ENCODE measurements at regions of chr21 and their contacts with region 1.

Region 1: DNA sequence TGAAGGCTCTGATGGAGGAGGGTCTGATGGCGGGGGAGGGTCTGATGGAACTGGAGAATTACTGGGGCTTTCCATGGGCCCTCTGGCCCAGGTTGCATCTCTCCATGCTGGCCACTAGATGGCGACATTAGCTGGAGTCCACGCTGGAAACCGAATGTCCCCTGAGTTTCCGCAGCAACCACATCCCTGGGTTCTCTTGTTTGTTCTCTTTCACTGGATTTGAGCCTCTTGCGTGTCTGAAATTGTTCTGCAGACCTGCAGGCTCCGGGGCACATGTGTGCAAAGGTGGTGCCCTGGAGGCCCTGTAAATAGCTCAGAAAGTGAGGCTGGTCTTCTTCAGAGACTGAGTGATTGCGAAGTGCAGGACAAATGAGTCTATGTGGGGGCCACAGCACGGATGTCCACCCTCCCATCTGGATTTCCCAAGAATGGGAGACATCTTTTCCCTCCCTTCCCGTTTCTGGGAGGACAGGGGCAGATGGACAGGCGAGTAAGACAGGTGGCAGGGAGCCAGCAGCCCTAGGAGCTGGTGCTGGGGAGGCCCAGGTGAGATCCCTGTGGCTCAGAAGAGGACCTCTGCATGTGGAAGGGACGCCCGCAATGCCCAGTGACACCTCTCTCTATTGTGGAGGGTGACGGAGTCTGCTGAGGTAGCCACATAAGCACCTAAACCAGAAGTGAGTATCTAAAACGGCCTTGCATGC is 73.2 kb upstream of the ABCG1 start:
- DNase-seq: peak; percentile 75
- ATAC-seq: peak; percentile 89
- H3K4me3 Mint-ChIP-seq: no peak overlapping the region
- H3K27ac Mint-ChIP-seq: no peak overlapping the region
- H3K4me1 Mint-ChIP-seq: peaks cover 8% of the 10 kb centered on the region
- H3K27me3 Mint-ChIP-seq: no peaks in the 10 kb centered on the region
- CTCF ChIP-seq: peak; percentile 91

Region 2: GRCh38 chr21:42182713-42183371 is 37.1 kb after region 1 on chr21:
- CTCF ChIA-PET with region 1: interaction called, 10 read pairs
- POLR2A ChIA-PET with region 1: no interaction called
- intact Hi-C with region 1: no loop called
- DNase-seq: no peak
- ATAC-seq: no peak
- H3K4me3 Mint-ChIP-seq: no peak overlapping the region
- H3K27ac Mint-ChIP-seq: no peak overlapping the region
- H3K4me1 Mint-ChIP-seq: peaks cover 26% of the 10 kb centered on the region
- H3K27me3 Mint-ChIP-seq: no peaks in the 10 kb centered on the region
- CTCF ChIP-seq: no peak

Region 3: DNA sequence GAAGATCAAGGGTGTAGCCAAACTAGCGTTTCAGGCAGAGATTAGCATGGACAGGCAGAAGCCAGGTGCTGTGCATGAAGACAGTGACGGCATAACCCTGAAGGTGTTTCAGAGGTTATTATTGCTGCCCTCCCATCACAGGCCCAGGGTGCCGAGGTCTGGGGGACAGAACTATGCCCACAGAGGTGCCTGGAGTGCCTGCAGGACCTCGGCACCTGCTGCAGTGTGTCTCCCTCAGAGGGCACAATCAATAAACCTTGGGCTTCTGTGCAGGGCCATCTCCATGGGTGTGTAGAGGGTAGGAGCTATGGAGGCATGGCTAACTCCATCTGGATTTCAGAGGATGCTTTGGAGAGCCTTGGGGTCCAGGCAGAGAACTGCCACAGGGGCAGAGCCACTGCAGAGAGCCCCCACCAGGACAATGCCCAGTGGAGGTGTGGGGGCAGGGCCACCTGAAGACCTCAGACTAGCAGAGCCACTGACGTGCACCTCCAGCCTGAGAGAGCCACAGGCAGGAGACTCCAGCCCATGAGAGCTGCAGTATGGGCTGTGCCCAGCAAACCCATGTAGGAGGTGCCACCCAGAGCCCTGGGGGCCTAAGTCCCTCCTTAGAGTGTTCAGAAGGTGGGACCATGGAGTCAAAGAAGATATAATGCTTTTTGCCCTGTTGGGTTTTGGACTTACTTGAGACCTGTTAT is 67.5 kb after region 1 on chr21:
- CTCF ChIA-PET with region 1: no interaction called
- POLR2A ChIA-PET with region 1: no interaction called
- intact Hi-C with region 1: no loop called
- DNase-seq: no peak
- ATAC-seq: no peak
- H3K4me3 Mint-ChIP-seq: no peak overlapping the region
- H3K27ac Mint-ChIP-seq: no peak overlapping the region
- H3K4me1 Mint-ChIP-seq: no peaks in the 10 kb centered on the region
- H3K27me3 Mint-ChIP-seq: no peaks in the 10 kb centered on the region
- CTCF ChIP-seq: no peak

Region 4: DNA sequence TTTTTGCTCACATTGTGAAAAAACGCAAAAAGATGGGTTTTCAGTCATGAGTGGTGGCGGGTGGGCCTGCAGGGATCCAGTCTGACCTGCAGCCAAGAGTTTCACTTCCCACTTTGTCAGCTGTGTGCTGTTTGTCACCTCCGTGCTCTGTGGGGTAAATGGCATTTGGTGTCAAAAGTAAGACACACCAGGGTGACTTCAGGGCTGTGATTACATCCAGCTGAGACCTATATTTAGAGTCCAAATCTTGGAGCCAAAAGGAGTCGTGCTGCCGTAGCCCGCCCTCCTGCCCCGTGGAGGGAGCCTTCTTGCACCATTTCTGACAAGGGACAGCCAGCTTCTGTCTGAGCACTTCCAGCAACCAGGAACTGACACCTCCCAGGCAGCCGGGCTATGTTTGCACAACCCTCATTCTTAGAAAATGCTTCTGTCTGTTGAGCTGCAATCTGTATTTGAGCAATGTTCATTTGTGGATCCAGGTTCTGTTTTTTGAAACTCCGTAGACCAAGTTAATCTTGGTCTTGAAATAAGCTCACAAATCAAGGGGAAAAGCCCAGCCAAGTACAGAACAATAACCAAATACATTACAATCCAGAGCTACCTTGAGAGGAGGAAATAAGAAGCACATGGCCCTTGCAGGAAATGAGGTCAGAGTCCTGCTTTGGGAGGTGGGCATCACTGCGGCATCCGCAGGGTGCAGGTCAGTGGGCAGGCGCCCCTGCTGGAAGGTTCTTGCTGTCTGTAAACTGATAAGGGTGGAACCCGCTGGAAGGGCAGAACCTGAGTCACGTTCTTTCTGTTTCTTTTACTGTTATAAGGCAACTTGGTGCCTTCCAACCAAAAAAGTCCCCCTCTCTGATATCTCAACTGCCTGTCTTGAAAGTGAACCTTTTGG is 87.6 kb after region 1 on chr21:
- CTCF ChIA-PET with region 1: interaction called, 16 read pairs
- POLR2A ChIA-PET with region 1: interaction called, 3 read pairs
- intact Hi-C with region 1: no loop called
- DNase-seq: peak; percentile 95
- ATAC-seq: peak; percentile 70
- H3K4me3 Mint-ChIP-seq: peak overlapping the region; percentile 73
- H3K27ac Mint-ChIP-seq: peak overlapping the region; percentile 97
- H3K4me1 Mint-ChIP-seq: peaks cover 96% of the 10 kb centered on the region
- H3K27me3 Mint-ChIP-seq: no peaks in the 10 kb centered on the region
- CTCF ChIP-seq: peak; percentile 68

Region 5: DNA sequence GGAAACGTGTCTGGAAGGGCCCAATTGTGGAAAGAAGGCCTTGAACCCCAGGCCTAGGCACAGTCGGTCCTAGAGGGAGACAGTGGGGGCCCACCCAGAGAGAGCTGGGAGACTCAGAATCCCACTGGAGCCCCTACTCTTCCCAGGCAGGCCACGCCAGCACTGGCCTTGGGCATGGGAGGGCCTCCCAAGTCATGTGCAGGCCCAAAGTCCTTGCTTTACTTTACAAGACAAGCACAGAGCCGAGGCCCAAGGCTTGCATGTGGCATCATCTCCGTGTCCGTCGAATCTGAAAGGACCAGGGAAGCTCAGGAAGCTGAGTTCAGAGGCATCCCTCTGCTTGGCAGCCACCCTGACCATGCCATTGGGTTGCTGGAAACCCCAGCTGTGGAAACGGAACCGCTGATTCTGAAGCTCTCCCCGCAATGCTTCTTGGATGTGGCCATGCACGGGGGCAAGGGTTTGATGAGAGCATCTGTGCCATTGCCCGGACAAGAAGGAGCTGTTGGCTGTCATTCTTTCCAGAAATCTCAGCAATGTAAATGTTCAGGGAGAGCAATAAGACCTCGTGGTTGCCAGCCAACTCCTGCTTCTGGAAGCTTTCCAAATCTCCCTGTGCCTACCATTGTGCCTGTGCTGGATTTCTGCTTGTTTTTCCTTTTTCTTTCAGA is 106.1 kb after region 1 on chr21:
- CTCF ChIA-PET with region 1: interaction called, 18 read pairs
- POLR2A ChIA-PET with region 1: no interaction called
- intact Hi-C with region 1: loop called (anchors 5 kb)
- DNase-seq: no peak
- ATAC-seq: no peak
- H3K4me3 Mint-ChIP-seq: no peak overlapping the region
- H3K27ac Mint-ChIP-seq: no peak overlapping the region
- H3K4me1 Mint-ChIP-seq: peaks cover 17% of the 10 kb centered on the region
- H3K27me3 Mint-ChIP-seq: no peaks in the 10 kb centered on the region
- CTCF ChIP-seq: no peak

Region 6: DNA sequence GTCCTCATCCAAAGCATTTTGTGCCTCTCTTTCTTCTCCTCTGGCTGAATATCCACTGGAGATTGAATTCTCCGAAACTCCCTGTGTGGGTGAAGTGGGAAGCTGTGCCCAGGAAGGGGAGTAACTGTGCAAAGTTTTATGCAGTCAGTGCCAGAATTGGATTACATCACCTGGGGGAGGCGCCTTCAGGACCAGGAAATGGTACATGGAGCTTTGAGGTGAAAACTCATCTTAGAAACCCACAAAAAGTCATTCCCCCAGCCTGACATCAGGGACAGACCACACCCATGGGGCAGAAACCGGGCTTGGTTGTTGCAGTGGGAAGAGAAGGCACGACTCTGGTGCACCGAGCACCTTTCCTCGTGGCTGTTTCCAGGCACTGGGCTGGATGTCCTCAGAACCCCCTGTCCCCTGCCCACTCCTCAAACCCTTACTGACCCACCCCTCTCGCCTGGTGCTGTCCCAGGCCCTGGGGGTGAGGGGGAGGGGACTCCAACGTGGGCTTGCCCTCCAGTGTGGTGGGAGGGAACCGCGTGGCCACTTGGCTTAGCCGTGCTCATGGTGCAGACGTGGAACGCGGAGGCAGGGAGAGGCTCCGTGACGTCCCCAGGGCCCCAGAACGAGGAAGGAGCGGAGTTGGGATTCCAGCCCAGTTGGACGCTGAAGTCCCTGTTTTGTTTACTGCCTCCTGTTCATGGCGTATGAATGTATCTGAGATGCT is 153.8 kb after region 1 on chr21:
- CTCF ChIA-PET with region 1: interaction called, 10 read pairs
- POLR2A ChIA-PET with region 1: no interaction called
- intact Hi-C with region 1: no loop called
- DNase-seq: peak; percentile 52
- ATAC-seq: peak; percentile 77
- H3K4me3 Mint-ChIP-seq: no peak overlapping the region
- H3K27ac Mint-ChIP-seq: no peak overlapping the region
- H3K4me1 Mint-ChIP-seq: peaks cover 14% of the 10 kb centered on the region
- H3K27me3 Mint-ChIP-seq: no peaks in the 10 kb centered on the region
- CTCF ChIP-seq: no peak

Region 7: GRCh38 chr21:42424914-42425541 is 279.3 kb after region 1 on chr21:
- CTCF ChIA-PET with region 1: interaction called, 3 read pairs
- POLR2A ChIA-PET with region 1: no interaction called
- intact Hi-C with region 1: loop called (anchors 10 kb)
- DNase-seq: peak; percentile 87
- ATAC-seq: peak; percentile 65
- H3K4me3 Mint-ChIP-seq: peak overlapping the region; percentile 74
- H3K27ac Mint-ChIP-seq: peak overlapping the region; percentile 93
- H3K4me1 Mint-ChIP-seq: peaks cover 73% of the 10 kb centered on the region
- H3K27me3 Mint-ChIP-seq: no peaks in the 10 kb centered on the region
- CTCF ChIP-seq: no peak

Measured in activated CD8-positive, alpha-beta T cell treated with anti-CD3 and anti-CD28 coated beads for 36 hours (primary cell).